ENCODE measurements at regions of chr2 and their contacts with region 1.

Region 1: GRCh38 chr2:30956995-30957394 is 149.7 kb upstream of the CAPN13 start:
- DNase-seq: peak; percentile 8
- H3K4me3 ChIP-seq: no peak overlapping the region
- CTCF ChIP-seq: no peak

Region 2: GRCh38 chr2:31028415-31028814 is 71.4 kb after region 1 on chr2:
- in situ Hi-C with region 1: loop called (anchors 5 kb)
- DNase-seq: no peak
- H3K4me3 ChIP-seq: no peak overlapping the region
- CTCF ChIP-seq: no peak